ENCODE measurements at regions of chr6 and their contacts with region 1.

Region 1: GRCh38 chr6:132512638-132513632 is at the start of gene STX7:
- DNase-seq: peak; percentile 94
- ATAC-seq: peak; percentile 79
- H3K4me3 ChIP-seq: peak within 1 kb of the TSS; percentile 59 to 98 (median 85)
- H3K4me3 Mint-ChIP-seq: peak within 1 kb of the TSS; percentile 93
- H3K27ac ChIP-seq: peak within 1 kb of the TSS; percentile 90 to 92
- H3K27ac Mint-ChIP-seq: peak within 1 kb of the TSS; percentile 95
- H3K4me1 ChIP-seq: peaks cover 33 to 36% of the 10 kb centered on the region in 2 donors
- H3K4me1 Mint-ChIP-seq: peaks cover 56% of the 10 kb centered on the region
- H3K27me3 ChIP-seq: no peaks in the 10 kb centered on the region
- H3K27me3 Mint-ChIP-seq: no peaks in the 10 kb centered on the region
- CTCF ChIP-seq: peak; percentile 12
- total RNA-seq, gene STX7: 221 and 227 TPM in 2 replicates

Region 2: DNA sequence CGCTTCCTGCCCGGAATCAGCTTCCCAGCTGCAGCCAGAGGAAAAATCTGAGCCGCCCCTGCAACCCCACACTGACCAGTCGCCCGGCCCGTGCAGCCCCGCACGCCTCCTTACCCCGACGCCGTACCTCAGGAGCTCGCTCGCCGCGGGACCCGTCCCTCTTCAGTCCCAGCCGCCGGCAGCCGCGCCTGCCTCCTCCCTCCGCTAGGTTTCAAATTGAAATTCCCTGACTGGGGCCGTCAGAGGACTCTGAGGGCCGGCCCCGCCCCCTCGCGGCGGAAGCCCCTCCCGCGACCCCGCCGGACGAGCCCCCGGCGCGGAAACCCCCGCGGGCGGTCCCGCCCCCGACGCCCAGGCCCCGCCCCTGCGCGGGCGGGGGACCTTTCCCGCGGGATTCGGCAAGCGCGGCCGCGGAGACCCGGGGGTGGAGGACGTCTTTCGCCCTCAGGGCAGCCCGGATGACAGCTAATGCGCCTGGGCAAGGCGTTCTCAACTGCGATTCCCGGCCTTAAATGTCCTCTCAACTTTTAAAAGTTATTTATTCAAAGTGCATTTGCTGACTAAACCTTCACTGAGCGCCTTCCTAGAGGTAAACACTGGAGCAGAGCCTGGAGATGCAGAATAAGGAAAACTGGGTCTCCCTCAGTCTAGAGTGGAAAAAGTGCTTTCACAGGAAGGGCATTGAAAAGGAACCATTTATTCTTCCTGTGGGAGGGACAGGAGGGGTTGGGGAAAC is 1449.7 kb before region 1 on chr6 and contains the start of gene EPB41L2:
- CTCF ChIA-PET with region 1: no interaction called
- POLR2A ChIA-PET with region 1: no interaction called
- intact Hi-C with region 1: loop called (anchors 10 kb)
- DNase-seq: peak; percentile 93
- ATAC-seq: peak; percentile 89
- H3K4me3 ChIP-seq: peak within 1 kb of the TSS; percentile 73 to 94 (median 90)
- H3K4me3 Mint-ChIP-seq: peak within 1 kb of the TSS; percentile 92
- H3K27ac ChIP-seq: peak within 1 kb of the TSS; percentile 72 to 78
- H3K27ac Mint-ChIP-seq: peak within 1 kb of the TSS; percentile 81
- H3K4me1 ChIP-seq: peaks cover 27 to 32% of the 10 kb centered on the region in 2 donors
- H3K4me1 Mint-ChIP-seq: peaks cover 33% of the 10 kb centered on the region
- H3K27me3 ChIP-seq: no peaks in the 10 kb centered on the region
- H3K27me3 Mint-ChIP-seq: no peaks in the 10 kb centered on the region
- CTCF ChIP-seq: peak; percentile 31
- total RNA-seq, gene EPB41L2: 59.8 and 61.0 TPM in 2 replicates

Region 3: GRCh38 chr6:132414761-132415160 is 98.2 kb before region 1 on chr6:
- CTCF ChIA-PET with region 1: no interaction called
- POLR2A ChIA-PET with region 1: no interaction called
- intact Hi-C with region 1: no loop called
- DNase-seq: no peak
- ATAC-seq: no peak
- H3K4me3 ChIP-seq: no peak overlapping the region
- H3K4me3 Mint-ChIP-seq: no peak overlapping the region
- H3K27ac ChIP-seq: no peak overlapping the region
- H3K27ac Mint-ChIP-seq: no peak overlapping the region
- H3K4me1 ChIP-seq: no peaks in the 10 kb centered on the region
- H3K4me1 Mint-ChIP-seq: peaks cover 3% of the 10 kb centered on the region
- H3K27me3 ChIP-seq: peaks cover 0 to 9% (median 6%) of the 10 kb centered on the region in 4 experiments
- H3K27me3 Mint-ChIP-seq: peaks cover 17% of the 10 kb centered on the region
- CTCF ChIP-seq: no peak

Region 4: GRCh38 chr6:132498638-132499037 is 14.3 kb before region 1 on chr6:
- CTCF ChIA-PET with region 1: interaction called, 28 read pairs
- POLR2A ChIA-PET with region 1: interaction called, 25 read pairs
- intact Hi-C with region 1: loop called (anchors 1 kb)
- DNase-seq: peak; percentile 71
- ATAC-seq: peak; percentile 70
- H3K4me3 ChIP-seq: peak overlapping the region in 1 of 5 experiments; percentile 49
- H3K4me3 Mint-ChIP-seq: peak overlapping the region; percentile 74
- H3K27ac ChIP-seq: peak overlapping the region; percentile 73 to 88
- H3K27ac Mint-ChIP-seq: peak overlapping the region; percentile 87
- H3K4me1 ChIP-seq: peaks cover 81 to 84% of the 10 kb centered on the region in 2 donors
- H3K4me1 Mint-ChIP-seq: peaks cover 85% of the 10 kb centered on the region
- H3K27me3 ChIP-seq: no peaks in the 10 kb centered on the region
- H3K27me3 Mint-ChIP-seq: no peaks in the 10 kb centered on the region
- CTCF ChIP-seq: no peak

Region 5: DNA sequence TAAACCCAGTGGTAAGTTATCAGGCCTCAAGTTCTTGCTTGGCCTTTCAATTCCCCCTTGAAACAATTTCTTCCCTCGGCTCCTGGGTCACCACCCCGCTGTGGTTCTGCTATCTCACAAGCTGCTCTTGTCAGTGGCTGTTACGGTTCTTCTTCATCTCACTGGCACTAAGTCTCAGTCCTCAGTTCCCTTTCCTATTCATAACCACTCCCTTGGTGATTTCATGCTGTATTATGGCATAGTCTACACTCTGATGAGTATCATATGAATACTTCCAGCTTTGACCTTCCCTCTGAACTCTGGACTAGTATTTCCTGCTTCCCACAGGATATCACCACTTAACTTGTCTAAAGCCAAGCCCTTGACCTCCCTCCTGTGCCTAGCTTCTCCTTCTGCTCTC is 138.1 kb after region 1 on chr6:
- CTCF ChIA-PET with region 1: no interaction called
- POLR2A ChIA-PET with region 1: interaction called, 10 read pairs
- intact Hi-C with region 1: no loop called
- DNase-seq: no peak
- ATAC-seq: no peak
- H3K4me3 ChIP-seq: no peak overlapping the region
- H3K4me3 Mint-ChIP-seq: no peak overlapping the region
- H3K27ac ChIP-seq: no peak overlapping the region
- H3K27ac Mint-ChIP-seq: no peak overlapping the region
- H3K4me1 ChIP-seq: no peaks in the 10 kb centered on the region
- H3K4me1 Mint-ChIP-seq: no peaks in the 10 kb centered on the region
- H3K27me3 ChIP-seq: no peaks in the 10 kb centered on the region
- H3K27me3 Mint-ChIP-seq: no peaks in the 10 kb centered on the region
- CTCF ChIP-seq: no peak

Region 6: DNA sequence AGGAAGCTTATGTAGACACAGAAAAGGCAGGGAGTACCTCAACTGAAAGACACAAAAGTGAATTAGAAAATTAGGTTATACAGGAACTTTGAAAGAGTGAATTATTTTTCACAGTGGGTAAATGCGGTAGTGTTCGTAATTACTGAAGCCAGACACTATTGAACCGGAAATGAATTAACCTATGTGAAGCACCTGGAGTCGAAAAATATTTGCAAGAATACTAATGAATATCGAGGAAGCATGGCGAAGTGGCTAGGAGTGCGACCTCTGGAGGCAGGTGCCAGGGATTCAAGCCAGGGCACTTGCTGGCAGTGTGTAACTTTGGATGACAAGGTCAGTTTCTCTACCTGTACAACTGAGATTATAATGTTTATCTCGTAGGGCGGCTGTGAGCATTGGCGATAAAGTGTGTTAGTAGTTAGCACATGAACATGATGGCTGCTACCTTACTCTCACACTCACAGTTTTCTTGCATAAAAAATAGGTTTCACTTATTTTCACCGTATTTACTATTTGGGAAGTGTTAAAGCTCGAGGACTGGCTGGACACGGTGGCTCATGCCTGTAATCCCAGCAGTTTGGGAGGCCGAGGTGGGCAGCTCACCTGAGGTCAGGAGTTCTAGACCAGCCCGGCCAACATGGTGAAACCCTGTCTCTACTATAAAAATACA is 286.1 kb after region 1 on chr6:
- CTCF ChIA-PET with region 1: interaction called, 5 read pairs
- POLR2A ChIA-PET with region 1: interaction called, 7 read pairs
- intact Hi-C with region 1: loop called (anchors 5 kb)
- DNase-seq: peak; percentile 84
- ATAC-seq: peak; percentile 75
- H3K4me3 ChIP-seq: peak overlapping the region in 4 of 5 experiments; percentile 67 to 91 (median 82)
- H3K4me3 Mint-ChIP-seq: peak overlapping the region; percentile 96
- H3K27ac ChIP-seq: peak overlapping the region in 1 of 2 donors; percentile 87
- H3K27ac Mint-ChIP-seq: no peak overlapping the region
- H3K4me1 ChIP-seq: peaks cover 5 to 8% of the 10 kb centered on the region in 2 donors
- H3K4me1 Mint-ChIP-seq: peaks cover 18% of the 10 kb centered on the region
- H3K27me3 ChIP-seq: no peaks in the 10 kb centered on the region
- H3K27me3 Mint-ChIP-seq: no peaks in the 10 kb centered on the region
- CTCF ChIP-seq: peak; percentile 83

Region 7: DNA sequence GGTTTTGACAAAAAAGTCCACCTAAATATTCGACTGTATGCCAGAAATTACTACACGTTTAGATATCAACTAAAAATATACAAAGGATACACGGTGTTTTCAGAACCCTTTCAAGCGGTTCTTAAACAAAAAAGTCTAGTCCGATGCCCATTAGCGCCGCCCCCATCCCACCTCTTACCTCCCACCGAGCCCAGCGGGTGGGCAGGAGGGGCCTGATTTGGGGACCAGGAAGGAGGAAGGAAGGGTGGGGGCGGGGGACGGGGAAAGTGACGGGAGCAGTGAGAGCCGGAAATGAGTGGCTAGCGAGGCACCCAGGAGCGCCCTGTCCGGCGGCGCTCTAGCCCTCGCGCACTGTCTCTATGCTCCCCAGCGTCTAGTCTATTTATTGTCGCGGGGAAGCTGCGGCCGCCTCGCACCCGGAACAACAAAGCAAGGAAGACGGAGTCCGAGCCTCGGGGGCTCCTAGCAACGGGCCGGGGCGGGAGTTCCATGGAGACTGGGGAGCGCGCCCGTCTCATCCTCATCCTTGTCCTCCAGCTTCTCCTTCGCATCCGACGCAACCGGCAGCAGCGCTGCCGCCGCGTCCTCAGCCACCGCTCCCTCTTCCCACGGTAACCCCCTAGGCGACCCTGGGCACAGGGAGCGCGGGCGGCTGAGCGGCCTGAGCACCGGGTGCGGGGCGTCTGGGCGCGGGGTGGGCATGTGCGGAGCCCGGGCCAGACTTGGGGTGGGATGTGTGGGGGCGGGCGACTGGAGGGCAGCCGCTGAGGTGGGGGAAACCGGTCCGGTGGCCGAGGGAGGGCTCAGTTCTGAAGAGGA is 1440.1 kb after region 1 on chr6 and contains the start of gene TBPL1:
- CTCF ChIA-PET with region 1: no interaction called
- POLR2A ChIA-PET with region 1: no interaction called
- intact Hi-C with region 1: loop called (anchors 2 kb)
- DNase-seq: peak; percentile 97
- ATAC-seq: peak; percentile 78
- H3K4me3 ChIP-seq: peak within 1 kb of the TSS; percentile 78 to 98 (median 94)
- H3K4me3 Mint-ChIP-seq: peak within 1 kb of the TSS; percentile 98
- H3K27ac ChIP-seq: peak within 1 kb of the TSS; percentile 83 to 89
- H3K27ac Mint-ChIP-seq: peak within 1 kb of the TSS; percentile 97
- H3K4me1 ChIP-seq: peaks cover 20 to 27% of the 10 kb centered on the region in 2 donors
- H3K4me1 Mint-ChIP-seq: peaks cover 48% of the 10 kb centered on the region
- H3K27me3 ChIP-seq: no peaks in the 10 kb centered on the region
- H3K27me3 Mint-ChIP-seq: no peaks in the 10 kb centered on the region
- CTCF ChIP-seq: no peak
- total RNA-seq, gene TBPL1: 26.9 and 29.6 TPM in 2 replicates

Measured in B cell (primary cell).